WTC11 (cell line): ENCODE measurements at regions of chr11 and their contacts with region 1.

Region 1: GRCh38 chr11:102614485-102614884 is 10.6 kb downstream of the MMP20 start:
- DNase-seq: no peak
- ATAC-seq: no peak
- H3K4me3 Mint-ChIP-seq: no peak overlapping the region
- H3K27ac Mint-ChIP-seq: no peak overlapping the region
- H3K4me1 Mint-ChIP-seq: peaks cover 40% of the 10 kb centered on the region
- H3K27me3 Mint-ChIP-seq: no peaks in the 10 kb centered on the region
- CTCF ChIP-seq: no peak

Region 2: GRCh38 chr11:102293873-102294601 is 320.4 kb before region 1 on chr11:
- CTCF ChIA-PET with region 1: interaction called, 17 read pairs
- POLR2A ChIA-PET with region 1: no interaction called
- DNase-seq: no peak
- ATAC-seq: peak; percentile 72
- H3K4me3 Mint-ChIP-seq: no peak overlapping the region
- H3K27ac Mint-ChIP-seq: no peak overlapping the region
- H3K4me1 Mint-ChIP-seq: peaks cover 12% of the 10 kb centered on the region
- H3K27me3 Mint-ChIP-seq: no peaks in the 10 kb centered on the region; the same call in 1 of the 2 replicates
- CTCF ChIP-seq: 0 out of 2 replicates have a peak, but pooled peaks have one; percentile 35

Region 3: DNA sequence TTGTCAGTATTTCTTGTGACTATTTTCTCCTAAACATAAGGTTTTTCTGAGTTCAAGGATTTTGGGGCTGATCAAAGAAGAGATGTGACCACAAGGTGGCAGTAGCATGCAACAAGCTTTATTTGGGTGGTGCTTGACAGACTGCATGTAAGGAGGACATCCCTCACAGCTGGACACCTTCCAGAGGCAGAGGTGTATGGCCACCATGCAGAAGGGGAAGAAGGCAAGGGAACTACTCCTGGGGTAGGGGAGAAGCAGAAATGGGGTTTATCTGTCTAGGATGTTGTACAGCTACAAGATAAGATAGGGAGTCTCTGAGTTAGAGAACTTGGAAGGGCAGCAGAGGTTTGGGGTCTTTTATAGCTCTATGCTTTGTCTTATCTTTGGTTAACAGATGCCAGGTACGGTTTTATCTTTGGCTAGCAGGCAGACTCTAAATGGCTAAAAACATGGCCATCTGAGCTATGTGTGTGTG is 272.6 kb before region 1 on chr11:
- CTCF ChIA-PET with region 1: interaction called, 31 read pairs
- POLR2A ChIA-PET with region 1: no interaction called
- DNase-seq: peak; percentile 79
- ATAC-seq: peak; percentile 92
- H3K4me3 Mint-ChIP-seq: no peak overlapping the region
- H3K27ac Mint-ChIP-seq: no peak overlapping the region
- H3K4me1 Mint-ChIP-seq: peaks cover 14% of the 10 kb centered on the region
- H3K27me3 Mint-ChIP-seq: no peaks in the 10 kb centered on the region
- CTCF ChIP-seq: peak; percentile 66

Region 4: GRCh38 chr11:102390667-102391465 is 223.6 kb before region 1 on chr11:
- CTCF ChIA-PET with region 1: interaction called, 32 read pairs
- POLR2A ChIA-PET with region 1: no interaction called
- DNase-seq: peak; percentile 77
- ATAC-seq: peak; percentile 99
- H3K4me3 Mint-ChIP-seq: no peak overlapping the region
- H3K27ac Mint-ChIP-seq: no peak overlapping the region
- H3K4me1 Mint-ChIP-seq: peaks cover 2% of the 10 kb centered on the region; the same call in 1 of the 2 replicates
- H3K27me3 Mint-ChIP-seq: no peaks in the 10 kb centered on the region
- CTCF ChIP-seq: peak; percentile 86

Region 5: GRCh38 chr11:102495161-102496042 is 119.1 kb before region 1 on chr11:
- CTCF ChIA-PET with region 1: interaction called, 18 read pairs
- POLR2A ChIA-PET with region 1: no interaction called
- DNase-seq: peak; percentile 44
- ATAC-seq: peak; percentile 94
- H3K4me3 Mint-ChIP-seq: peak overlapping the region; percentile 33; the same call in 1 of the 2 replicates
- H3K27ac Mint-ChIP-seq: peak overlapping the region; percentile 65; the same call in 1 of the 2 replicates
- H3K4me1 Mint-ChIP-seq: peaks cover 6% of the 10 kb centered on the region
- H3K27me3 Mint-ChIP-seq: no peaks in the 10 kb centered on the region
- CTCF ChIP-seq: peak; percentile 48

Region 6: GRCh38 chr11:102518296-102519094 is 96.0 kb before region 1 on chr11:
- CTCF ChIA-PET with region 1: interaction called, 21 read pairs
- POLR2A ChIA-PET with region 1: no interaction called
- DNase-seq: no peak
- ATAC-seq: peak; percentile 65
- H3K4me3 Mint-ChIP-seq: no peak overlapping the region
- H3K27ac Mint-ChIP-seq: no peak overlapping the region
- H3K4me1 Mint-ChIP-seq: no peaks in the 10 kb centered on the region
- H3K27me3 Mint-ChIP-seq: peaks cover 4% of the 10 kb centered on the region
- CTCF ChIP-seq: no peak

Region 7: GRCh38 chr11:102603091-102603490 is 11.4 kb before region 1 on chr11:
- CTCF ChIA-PET with region 1: interaction called, 17 read pairs
- POLR2A ChIA-PET with region 1: no interaction called
- DNase-seq: no peak
- ATAC-seq: no peak
- H3K4me3 Mint-ChIP-seq: no peak overlapping the region
- H3K27ac Mint-ChIP-seq: no peak overlapping the region
- H3K4me1 Mint-ChIP-seq: peaks cover 12% of the 10 kb centered on the region
- H3K27me3 Mint-ChIP-seq: no peaks in the 10 kb centered on the region
- CTCF ChIP-seq: no peak

Region 8: GRCh38 chr11:103070142-103070541 is 455.7 kb after region 1 on chr11:
- CTCF ChIA-PET with region 1: no interaction called
- POLR2A ChIA-PET with region 1: no interaction called
- DNase-seq: no peak
- ATAC-seq: no peak
- H3K4me3 Mint-ChIP-seq: no peak overlapping the region
- H3K27ac Mint-ChIP-seq: no peak overlapping the region
- H3K4me1 Mint-ChIP-seq: peaks cover 19% of the 10 kb centered on the region
- H3K27me3 Mint-ChIP-seq: no peaks in the 10 kb centered on the region
- CTCF ChIP-seq: no peak